OCI-LY7 (cell line): ENCODE measurements at regions of chr18 and their contacts with region 1.

Region 1: GRCh38 chr18:45071956-45072355 is 391.3 kb downstream of the SETBP1 start:
- DNase-seq: no peak
- H3K4me3 ChIP-seq: no peak overlapping the region
- H3K27ac ChIP-seq: no peak overlapping the region
- H3K4me1 ChIP-seq: no peaks in the 10 kb centered on the region
- CTCF ChIP-seq: no peak

Region 2: GRCh38 chr18:45090526-45091140 is 18.7 kb after region 1 on chr18:
- CTCF ChIA-PET with region 1: no interaction called
- POLR2A ChIA-PET with region 1: no interaction called
- intact Hi-C with region 1: loop called (anchors 2 kb)
- DNase-seq: no peak
- H3K4me3 ChIP-seq: no peak overlapping the region
- H3K27ac ChIP-seq: no peak overlapping the region
- H3K4me1 ChIP-seq: no peaks in the 10 kb centered on the region
- CTCF ChIP-seq: no peak

Region 3: GRCh38 chr18:45136381-45137086 is 64.6 kb after region 1 on chr18:
- CTCF ChIA-PET with region 1: no interaction called
- POLR2A ChIA-PET with region 1: no interaction called
- intact Hi-C with region 1: no loop called
- DNase-seq: no peak
- H3K4me3 ChIP-seq: no peak overlapping the region
- H3K27ac ChIP-seq: no peak overlapping the region
- H3K4me1 ChIP-seq: peaks cover 7% of the 10 kb centered on the region
- CTCF ChIP-seq: no peak